PC-9 (cell line): ENCODE measurements at regions of chr2 and their contacts with region 1.

Region 1: GRCh38 chr2:54471221-54471711 is 15.1 kb downstream of the SPTBN1 start:
- DNase-seq: peak; percentile 42 to 57
- H3K4me3 ChIP-seq: no peak overlapping the region
- H3K27ac ChIP-seq: no peak overlapping the region
- H3K4me1 ChIP-seq: no peaks in the 10 kb centered on the region
- H3K27me3 ChIP-seq: no peaks in the 10 kb centered on the region
- CTCF ChIP-seq: no peak

Region 2: DNA sequence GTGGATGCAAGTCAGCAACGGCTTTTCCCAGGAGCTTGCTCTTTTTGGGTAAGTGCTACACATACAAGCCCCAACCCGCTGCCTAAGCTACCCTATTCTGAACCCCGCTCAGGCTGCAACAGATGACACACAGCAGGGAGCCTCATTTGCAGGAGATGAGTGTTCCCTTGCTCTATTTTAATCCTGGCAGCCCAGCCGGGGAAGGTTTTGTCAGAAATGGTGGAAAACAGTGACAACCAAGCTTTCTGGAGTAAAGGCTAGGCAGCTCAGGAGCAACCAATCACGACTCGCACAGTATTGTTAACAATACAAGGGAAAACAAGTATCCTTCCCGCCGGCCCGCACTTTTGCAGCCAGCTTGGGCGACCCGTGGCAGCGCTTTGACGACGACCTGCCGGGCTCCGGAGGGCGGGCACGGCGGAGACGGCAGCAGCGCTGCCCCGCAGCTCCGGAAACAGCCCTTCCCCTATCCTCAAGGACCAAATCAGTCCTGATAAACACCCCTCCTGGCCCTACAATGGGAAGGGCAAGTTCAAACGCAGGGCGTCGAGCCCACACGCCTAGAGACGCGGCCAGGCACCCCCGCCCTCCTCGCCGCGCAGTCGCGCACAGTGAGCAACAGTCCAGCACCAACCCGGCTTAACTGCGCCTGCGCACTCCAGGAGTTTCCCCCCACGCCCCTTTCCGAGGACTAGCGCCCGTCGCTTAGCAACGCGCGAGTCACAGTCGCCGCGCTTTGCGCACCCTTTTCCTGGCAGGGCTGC is 140.9 kb before region 1 on chr2:
- CTCF ChIA-PET with region 1: interaction called, 10 read pairs
- POLR2A ChIA-PET with region 1: no interaction called
- intact Hi-C with region 1: no loop called
- DNase-seq: peak; percentile 93 to 98
- H3K4me3 ChIP-seq: peak overlapping the region; percentile 74
- H3K27ac ChIP-seq: 0 out of 2 replicates have a peak overlapping the region, but pooled peaks have one; percentile 6
- H3K4me1 ChIP-seq: peaks cover 15% of the 10 kb centered on the region
- H3K27me3 ChIP-seq: no peaks in the 10 kb centered on the region
- CTCF ChIP-seq: no peak

Region 3: DNA sequence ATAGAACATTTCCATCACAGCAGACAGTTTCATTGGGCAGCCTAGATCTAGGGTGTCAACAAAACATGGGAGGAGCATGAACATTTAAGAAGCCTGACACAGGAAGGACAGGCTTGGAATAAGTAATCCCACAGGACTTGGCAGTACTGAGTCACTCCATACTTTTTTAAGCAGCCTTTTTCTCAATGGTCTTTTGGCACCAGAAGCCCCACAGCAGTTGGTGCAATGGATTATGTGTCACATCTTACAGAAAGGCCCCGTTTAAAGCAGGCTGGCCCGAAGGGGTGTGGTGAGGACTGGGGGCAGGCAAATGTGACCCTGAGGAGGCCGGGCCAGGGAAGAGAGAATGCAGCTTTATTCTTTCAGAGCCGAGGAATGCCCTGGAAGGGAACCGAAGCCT is 11.4 kb after region 1 on chr2:
- CTCF ChIA-PET with region 1: no interaction called
- POLR2A ChIA-PET with region 1: no interaction called
- intact Hi-C with region 1: loop called (anchors 1 kb)
- DNase-seq: peak in 1 of 2 experiments; percentile 70
- H3K4me3 ChIP-seq: no peak overlapping the region
- H3K27ac ChIP-seq: no peak overlapping the region
- H3K4me1 ChIP-seq: peaks cover 26% of the 10 kb centered on the region
- H3K27me3 ChIP-seq: no peaks in the 10 kb centered on the region
- CTCF ChIP-seq: no peak

Region 4: GRCh38 chr2:54597153-54597848 is 126.0 kb after region 1 on chr2:
- CTCF ChIA-PET with region 1: interaction called, 12 read pairs
- POLR2A ChIA-PET with region 1: no interaction called
- intact Hi-C with region 1: no loop called
- DNase-seq: no peak
- H3K4me3 ChIP-seq: no peak overlapping the region
- H3K27ac ChIP-seq: no peak overlapping the region
- H3K4me1 ChIP-seq: no peaks in the 10 kb centered on the region
- H3K27me3 ChIP-seq: no peaks in the 10 kb centered on the region
- CTCF ChIP-seq: no peak